Activated T-helper 2 cell treated with anti-CD3 and anti-CD28 coated beads, Interferon-gamma antibody, Interleukin-2, Interleukin-4, amounts not matched to agents 10 μg/mL and 5 μg/mL and 100 μg/mL, durations not matched to agents 14 hours and 24 hours and 36 hours (primary cell): ENCODE measurements at regions of chr3 and their contacts with region 1.

Region 1: DNA sequence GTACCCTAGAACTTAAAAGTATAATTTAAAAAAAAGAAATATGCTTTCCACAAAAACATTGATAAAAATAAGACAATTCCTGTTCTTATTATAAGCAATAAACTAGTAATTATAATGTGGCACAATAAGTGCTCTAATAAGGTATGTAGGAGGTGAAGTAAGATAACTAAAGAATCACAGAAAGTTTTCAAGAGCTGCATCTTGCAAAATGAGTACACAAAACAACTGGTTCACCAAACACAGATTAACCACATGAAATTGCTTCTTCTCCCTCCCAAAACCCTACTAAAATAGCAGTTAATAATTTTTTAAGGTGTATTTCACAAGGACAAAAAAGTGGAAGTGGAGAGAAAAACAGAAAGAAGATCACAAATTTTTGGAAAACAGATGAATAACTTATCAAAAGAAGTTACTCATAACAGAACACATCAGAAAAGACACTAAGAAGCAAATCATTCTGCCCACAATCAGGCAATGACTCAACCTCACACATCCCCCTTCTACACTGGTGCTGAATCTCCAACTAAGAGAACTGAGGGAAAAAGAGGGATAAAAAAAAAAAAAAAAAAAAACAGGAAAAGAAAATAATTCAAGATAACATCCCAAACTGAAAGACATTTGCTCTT is 64.2 kb downstream of the TBC1D5 start:
- DNase-seq: no peak
- H3K4me3 Mint-ChIP-seq: no peak overlapping the region
- H3K27ac Mint-ChIP-seq: no peak overlapping the region
- H3K4me1 Mint-ChIP-seq: peaks cover 4% of the 10 kb centered on the region
- H3K27me3 Mint-ChIP-seq: no peaks in the 10 kb centered on the region

Region 2: DNA sequence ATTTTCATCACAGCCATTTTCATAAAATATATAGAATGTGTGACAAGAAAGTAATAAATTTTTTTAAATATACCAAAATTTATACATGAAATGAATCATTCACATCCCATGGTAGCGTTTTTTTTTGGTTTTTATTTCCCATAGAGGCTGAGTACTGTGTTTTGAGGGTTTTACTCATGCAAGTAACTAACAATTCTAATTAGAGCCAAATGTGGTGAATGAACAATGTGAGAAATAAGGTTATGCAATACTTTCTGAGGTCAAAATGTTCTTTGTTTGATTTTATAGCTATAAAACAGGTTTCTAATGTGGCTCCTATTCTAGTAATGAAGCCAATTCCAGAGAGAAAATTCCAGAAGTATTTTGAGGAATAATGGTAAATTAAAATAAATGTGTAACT is 322.6 kb before region 1 on chr3:
- intact Hi-C with region 1: no loop called
- DNase-seq: no peak
- H3K4me3 Mint-ChIP-seq: no peak overlapping the region
- H3K27ac Mint-ChIP-seq: no peak overlapping the region
- H3K4me1 Mint-ChIP-seq: no peaks in the 10 kb centered on the region
- H3K27me3 Mint-ChIP-seq: no peaks in the 10 kb centered on the region

Region 3: DNA sequence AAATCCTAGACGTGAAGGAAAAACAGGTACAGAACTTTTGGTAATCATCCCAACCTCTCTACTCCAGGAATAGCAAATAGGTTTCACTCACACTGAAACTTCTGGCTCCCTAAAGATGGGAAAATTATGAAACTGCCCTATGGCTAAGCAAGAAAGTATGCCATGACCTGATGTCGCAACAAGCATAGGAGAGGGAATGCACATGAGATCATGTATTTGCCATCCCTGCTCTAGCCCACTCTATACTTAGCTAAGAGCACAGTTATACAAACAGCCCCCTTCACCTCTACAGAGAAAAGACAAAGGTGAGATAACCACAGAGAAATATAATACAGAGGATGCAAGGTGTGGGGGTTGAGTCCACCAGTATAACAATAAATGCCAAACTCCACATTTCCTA is 38.5 kb before region 1 on chr3:
- intact Hi-C with region 1: loop called (anchors 5 kb)
- DNase-seq: no peak
- H3K4me3 Mint-ChIP-seq: no peak overlapping the region
- H3K27ac Mint-ChIP-seq: no peak overlapping the region
- H3K4me1 Mint-ChIP-seq: peaks cover 6% of the 10 kb centered on the region
- H3K27me3 Mint-ChIP-seq: no peaks in the 10 kb centered on the region

Region 4: DNA sequence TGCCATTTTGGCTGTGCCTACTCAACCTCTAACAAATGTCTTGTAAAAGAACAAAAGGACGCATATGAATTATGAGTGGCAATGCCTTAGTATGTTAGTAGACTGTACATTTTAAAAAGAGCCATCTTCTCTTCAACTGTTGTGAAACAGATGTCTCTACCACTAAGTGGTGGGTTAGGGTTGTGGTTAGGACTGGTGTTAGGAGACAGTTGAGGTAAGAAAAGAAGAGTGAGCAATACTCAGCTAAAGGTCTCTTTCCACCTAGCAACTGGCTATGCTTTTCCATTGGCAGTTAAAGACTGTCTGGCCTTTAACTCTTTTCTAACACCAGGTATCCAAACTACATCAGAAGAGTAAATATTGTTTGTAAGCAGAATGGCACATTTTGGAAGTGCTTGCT is 285.9 kb after region 1 on chr3:
- intact Hi-C with region 1: no loop called
- DNase-seq: no peak
- H3K4me3 Mint-ChIP-seq: no peak overlapping the region
- H3K27ac Mint-ChIP-seq: peak overlapping the region; percentile 54
- H3K4me1 Mint-ChIP-seq: peaks cover 11% of the 10 kb centered on the region
- H3K27me3 Mint-ChIP-seq: peaks cover 2% of the 10 kb centered on the region